Activated CD8-positive, alpha-beta T cell treated with anti-CD3 and anti-CD28 coated beads for 36 hours (primary cell): ENCODE measurements at regions of chr5 and their contacts with region 1.

Region 1: DNA sequence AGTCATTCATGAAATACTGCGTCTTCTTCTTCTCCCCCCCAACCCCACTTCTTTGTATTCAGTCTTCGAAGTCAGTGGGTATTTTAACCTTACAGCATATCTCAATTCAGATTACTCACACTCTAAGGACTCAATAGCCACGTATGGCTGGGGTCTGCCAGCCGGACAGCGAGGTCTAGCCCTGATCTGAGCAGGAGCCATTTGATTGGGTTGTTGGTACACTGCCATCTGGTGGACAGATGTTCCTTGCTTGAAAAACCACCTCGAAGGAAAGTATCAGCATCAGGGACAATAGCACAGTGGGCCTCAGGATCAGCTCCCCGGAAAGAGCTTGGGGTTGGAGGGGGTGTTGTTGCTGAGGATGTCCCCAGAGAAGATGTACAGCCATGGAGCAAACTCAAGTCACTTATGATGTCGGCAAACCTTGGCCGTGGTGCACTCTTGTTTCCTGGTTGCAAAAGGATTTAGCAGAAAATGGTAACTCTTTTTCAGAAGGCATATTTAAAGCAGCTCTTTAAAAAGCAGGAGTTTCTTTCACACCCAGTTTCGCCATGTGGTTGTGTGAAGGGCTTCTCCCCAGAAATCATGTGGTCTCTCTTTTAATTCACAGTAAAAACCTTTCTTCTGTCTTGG is 31.7 kb upstream of the KCNMB1 start:
- DNase-seq: peak; percentile 72
- ATAC-seq: peak; percentile 75
- H3K4me3 Mint-ChIP-seq: no peak overlapping the region
- H3K27ac Mint-ChIP-seq: no peak overlapping the region
- H3K4me1 Mint-ChIP-seq: peaks cover 12% of the 10 kb centered on the region
- H3K27me3 Mint-ChIP-seq: no peaks in the 10 kb centered on the region
- CTCF ChIP-seq: peak; percentile 67

Region 2: DNA sequence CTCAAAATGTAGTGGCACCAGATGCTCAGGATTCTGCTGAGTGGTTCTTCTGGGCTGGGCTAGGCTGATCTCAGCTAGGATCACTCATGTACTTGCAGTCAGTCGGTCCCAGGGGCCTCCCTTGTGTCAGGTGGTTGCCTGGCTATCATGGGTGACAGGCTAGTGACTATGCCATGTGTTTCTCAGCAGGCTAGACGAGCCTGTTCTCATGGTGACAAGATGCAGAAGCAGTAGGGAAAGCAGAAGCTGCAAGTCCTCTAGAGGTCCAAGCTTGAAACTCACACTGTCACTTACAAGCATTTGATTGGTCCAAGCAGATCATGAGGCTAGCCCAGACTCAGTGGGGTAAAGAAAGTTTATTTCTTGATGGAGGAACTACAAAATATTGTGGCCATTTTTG is 16.5 kb before region 1 on chr5:
- CTCF ChIA-PET with region 1: interaction called, 17 read pairs
- POLR2A ChIA-PET with region 1: no interaction called
- intact Hi-C with region 1: no loop called
- DNase-seq: no peak
- ATAC-seq: no peak
- H3K4me3 Mint-ChIP-seq: no peak overlapping the region
- H3K27ac Mint-ChIP-seq: no peak overlapping the region
- H3K4me1 Mint-ChIP-seq: no peaks in the 10 kb centered on the region
- H3K27me3 Mint-ChIP-seq: no peaks in the 10 kb centered on the region
- CTCF ChIP-seq: no peak